ENCODE measurements at regions of chr1 and their contacts with region 1.

Region 1: GRCh38 chr1:32072622-32073298 is at the start of gene TMEM39B:
- DNase-seq: peak; percentile 96 to 97
- H3K4me3 ChIP-seq: peak within 1 kb of the TSS; percentile 30 to 89 (median 73)
- H3K27ac ChIP-seq: peak within 1 kb of the TSS; percentile 93 to 95 (median 95)
- H3K4me1 ChIP-seq: peaks cover 11 to 22% of the 10 kb centered on the region in 2 donors
- H3K27me3 ChIP-seq: no peaks in the 10 kb centered on the region
- CTCF ChIP-seq: peak in 3 of 6 experiments; percentile 30 to 44 (median 41)
- POLR2A ChIP-seq: peak; percentile 48 to 65
- total RNA-seq, gene TMEM39B: 7.6 to 12.8 (median 9.6) TPM

Region 2: DNA sequence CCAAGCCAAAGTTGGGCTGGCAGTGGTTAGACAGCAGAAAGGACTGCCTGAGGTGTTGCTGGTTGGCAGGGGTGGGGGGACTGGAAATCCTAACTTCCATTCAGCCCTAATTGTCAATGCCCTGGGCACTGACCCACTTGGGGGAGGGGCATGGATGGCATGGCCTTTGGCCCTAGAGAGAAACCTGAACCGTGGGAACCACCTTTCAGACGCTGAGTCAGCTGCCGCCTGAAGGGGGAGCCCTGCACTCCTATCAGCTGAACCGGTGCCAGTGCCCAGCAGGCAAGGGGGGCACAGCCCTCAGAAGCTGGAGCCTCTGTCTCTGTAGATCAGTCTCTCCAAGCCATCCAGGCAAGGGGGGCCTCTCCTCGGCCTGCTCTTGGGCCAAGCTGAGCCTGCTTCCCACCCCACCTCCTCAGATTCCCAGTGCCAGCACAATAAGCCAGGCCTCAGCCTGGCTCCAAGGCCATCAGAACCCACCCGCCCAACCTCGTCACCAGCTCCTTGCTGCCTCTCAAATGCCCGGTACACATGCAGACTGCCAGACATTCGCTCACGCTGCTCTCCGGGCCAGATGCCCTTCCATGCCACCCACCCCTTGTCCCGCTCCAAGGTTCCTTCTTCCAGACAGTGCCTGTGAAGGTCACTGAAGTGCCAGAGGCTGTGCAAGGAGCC is 484.9 kb before region 1 on chr1:
- intact Hi-C with region 1: no loop called
- DNase-seq: peak; percentile 85 to 90
- H3K4me3 ChIP-seq: no peak overlapping the region
- H3K27ac ChIP-seq: peak overlapping the region; percentile 72 to 86 (median 82)
- H3K4me1 ChIP-seq: peaks cover 46 to 67% of the 10 kb centered on the region in 2 donors
- H3K27me3 ChIP-seq: no peaks in the 10 kb centered on the region
- CTCF ChIP-seq: peak; percentile 52 to 72 (median 62)
- POLR2A ChIP-seq: peak in 1 of 2 donors; percentile 48

Region 3: DNA sequence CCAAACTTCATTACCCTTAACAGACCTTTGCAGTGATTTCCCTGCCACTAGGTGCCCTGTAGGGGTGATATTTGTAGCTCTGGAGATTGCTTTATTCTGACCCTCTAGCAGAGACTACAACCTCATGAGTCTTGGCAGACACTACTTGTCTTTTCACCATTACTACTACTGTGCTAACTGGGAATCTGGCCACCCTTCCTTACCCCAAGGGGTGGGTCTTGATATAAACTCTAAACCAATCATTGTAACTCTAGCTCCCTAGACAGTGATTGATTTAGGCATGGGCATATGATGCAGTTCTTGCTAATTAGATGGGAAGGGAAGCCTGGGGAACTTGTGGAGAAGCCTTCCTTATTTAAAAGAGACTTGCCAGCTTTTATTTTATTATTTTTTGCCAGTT is 39.0 kb after region 1 on chr1:
- intact Hi-C with region 1: loop called (anchors 5 kb)
- DNase-seq: no peak
- H3K4me3 ChIP-seq: no peak overlapping the region
- H3K27ac ChIP-seq: peak overlapping the region in 1 of 3 donors; percentile 9
- H3K4me1 ChIP-seq: peaks cover 58% of the 10 kb centered on the region in 2 donors
- H3K27me3 ChIP-seq: no peaks in the 10 kb centered on the region
- CTCF ChIP-seq: no peak
- POLR2A ChIP-seq: no peak

Region 4: DNA sequence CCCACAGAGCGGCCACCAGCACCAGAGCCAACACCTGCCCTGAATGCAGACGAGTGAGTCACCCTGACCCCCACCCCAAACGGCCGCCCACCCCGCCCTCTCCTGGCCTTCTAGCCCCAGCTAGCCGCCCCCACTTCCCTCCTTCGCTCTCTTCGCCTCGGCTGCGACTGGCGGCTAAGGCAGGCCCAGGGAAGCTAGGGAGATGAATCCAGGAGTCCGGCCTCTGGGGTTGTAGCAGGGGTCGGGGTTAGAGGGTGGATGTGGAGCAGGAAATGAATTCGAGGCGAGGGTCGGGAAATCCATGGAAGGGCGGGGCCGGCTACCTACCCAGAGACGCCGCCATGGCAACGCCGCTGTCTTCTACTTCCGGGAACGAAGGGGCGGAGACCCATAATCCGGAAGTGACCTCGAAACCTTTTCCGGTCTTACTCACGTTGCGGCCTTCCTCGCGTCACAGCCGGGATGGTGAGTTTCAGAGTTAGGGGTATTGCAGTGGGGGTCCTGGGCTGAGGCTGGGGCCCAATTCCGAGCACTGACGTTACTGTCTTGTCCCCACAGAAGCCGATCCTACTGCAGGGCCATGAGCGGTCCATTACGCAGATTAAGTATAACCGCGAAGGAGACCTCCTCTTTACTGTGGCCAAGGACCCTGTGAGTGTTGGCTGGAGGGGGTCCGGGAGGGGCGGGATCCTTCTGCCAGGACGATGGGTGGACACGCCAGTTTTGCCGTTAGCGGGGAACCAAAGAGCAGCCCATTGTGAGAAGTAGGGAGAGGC is 149.4 kb after region 1 on chr1 and contains the starts of genes EIF3I and TMEM234:
- intact Hi-C with region 1: no loop called
- DNase-seq: peak; percentile 93
- H3K4me3 ChIP-seq: peak within 1 kb of the TSS; percentile 61 to 99 (median 90)
- H3K27ac ChIP-seq: peak within 1 kb of the TSS; percentile 77 to 89 (median 84)
- H3K4me1 ChIP-seq: peaks cover 27 to 36% of the 10 kb centered on the region in 2 donors
- H3K27me3 ChIP-seq: no peaks in the 10 kb centered on the region
- CTCF ChIP-seq: no peak
- POLR2A ChIP-seq: peak in 1 of 2 donors; percentile 75
- total RNA-seq, gene EIF3I: 193 to 383 (median 216) TPM
- total RNA-seq, gene TMEM234: 38.4 to 52.8 (median 39.2) TPM

Region 5: DNA sequence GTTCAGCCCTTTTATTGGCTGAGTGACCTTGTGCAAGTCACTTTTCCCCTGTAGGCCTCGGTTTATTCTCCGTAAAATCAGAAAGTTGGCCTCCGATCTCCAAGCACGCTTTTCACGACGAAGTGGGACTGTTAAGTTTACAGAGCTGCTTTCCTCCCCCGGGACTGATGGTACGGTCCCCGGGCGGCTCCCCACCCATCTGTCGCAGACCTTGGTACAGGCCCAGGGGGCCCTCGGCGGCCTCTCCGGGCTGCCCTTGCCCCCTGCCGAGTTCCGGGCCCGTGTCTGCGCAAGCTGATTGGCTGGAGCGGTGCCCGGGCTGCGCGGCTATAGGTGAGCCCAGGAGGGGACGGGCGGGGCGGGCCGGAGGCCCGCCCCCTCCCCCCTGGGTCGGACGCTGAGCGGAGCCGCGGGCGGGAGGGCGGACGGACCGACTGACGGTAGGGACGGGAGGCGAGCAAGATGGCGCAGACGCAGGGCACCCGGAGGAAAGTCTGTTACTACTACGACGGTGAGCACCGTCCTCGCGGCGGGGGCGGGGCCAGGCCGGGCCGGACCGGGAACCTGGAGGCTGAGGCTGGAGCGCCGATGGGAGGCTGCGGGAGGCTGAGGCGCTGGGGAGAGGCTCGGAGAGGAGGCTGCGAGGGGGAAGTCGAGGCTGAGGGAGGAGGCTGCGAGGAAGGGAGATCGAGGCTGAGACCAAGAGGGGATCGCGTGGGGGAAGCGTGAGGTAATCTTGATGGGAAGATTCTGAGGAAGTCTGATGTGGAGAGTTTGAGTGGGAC is 219.1 kb after region 1 on chr1 and contains the start of gene HDAC1:
- intact Hi-C with region 1: no loop called
- DNase-seq: peak; percentile 99
- H3K4me3 ChIP-seq: peak within 1 kb of the TSS; percentile 78 to 98 (median 91)
- H3K27ac ChIP-seq: peak within 1 kb of the TSS; percentile 78 to 91 (median 79)
- H3K4me1 ChIP-seq: peaks cover 0 to 14% of the 10 kb centered on the region in 2 donors
- H3K27me3 ChIP-seq: no peaks in the 10 kb centered on the region
- CTCF ChIP-seq: peak in 1 of 6 experiments; percentile 3
- POLR2A ChIP-seq: peak; percentile 13 to 75
- total RNA-seq, gene HDAC1: 78.2 to 96.8 (median 85.0) TPM

Measured in thyroid gland (tissue), 4 donors.